Heart left ventricle (tissue), 16 donors: ENCODE measurements at regions of chr11 and their contacts with region 1.

Region 1: DNA sequence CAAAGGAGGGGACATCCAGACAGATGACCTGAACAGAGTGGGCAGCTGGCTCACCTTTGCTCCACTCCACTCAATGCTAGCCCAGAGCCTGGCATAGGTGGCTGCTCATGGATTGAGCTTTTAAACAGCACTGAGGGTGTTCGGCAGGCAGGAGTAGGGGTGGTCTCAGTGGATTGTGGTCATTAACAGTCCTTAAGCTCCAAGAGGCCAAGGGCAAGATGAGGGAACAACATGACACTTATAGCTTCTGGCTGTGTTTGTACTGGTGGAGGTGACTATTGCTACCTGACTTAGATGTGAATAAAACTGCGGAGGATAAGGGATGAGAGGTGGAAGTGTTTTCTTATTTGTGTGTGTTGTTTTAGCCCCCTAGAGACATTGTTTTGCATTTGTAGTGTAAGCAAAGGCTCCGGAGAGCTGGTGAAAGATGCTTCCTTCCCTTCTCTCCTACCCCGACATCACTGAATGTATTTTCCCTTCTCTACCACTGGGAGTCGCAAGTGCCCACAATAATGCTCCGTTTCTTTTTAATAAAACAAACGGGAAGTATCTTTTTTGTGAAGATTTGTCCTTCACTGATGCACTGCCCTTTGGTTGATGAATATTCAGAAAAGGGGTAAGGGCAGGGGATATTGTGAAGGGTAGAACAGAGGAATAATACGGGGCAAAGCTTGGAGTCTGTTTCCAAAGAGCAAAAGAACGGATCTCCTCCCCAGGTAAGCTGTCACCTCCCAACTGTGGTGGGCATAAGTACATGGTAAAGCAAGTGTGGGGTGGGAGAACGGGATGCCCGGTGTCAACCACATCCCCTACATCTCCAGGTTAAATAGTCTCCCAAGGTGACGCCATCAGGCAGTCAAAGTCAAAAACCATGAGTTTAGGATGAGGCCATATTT is 27.5 kb upstream of the MTNR1B start:
- DNase-seq: no peak
- ATAC-seq: no peak
- H3K4me3 ChIP-seq: no peak overlapping the region
- H3K27ac ChIP-seq: no peak overlapping the region
- H3K4me1 ChIP-seq: no peaks in the 10 kb centered on the region
- H3K27me3 ChIP-seq: peaks cover 0 to 14% (median 0%) of the 10 kb centered on the region in 9 donors
- CTCF ChIP-seq: peak; percentile 30 to 64 (median 50)
- POLR2A ChIP-seq: no peak

Region 2: DNA sequence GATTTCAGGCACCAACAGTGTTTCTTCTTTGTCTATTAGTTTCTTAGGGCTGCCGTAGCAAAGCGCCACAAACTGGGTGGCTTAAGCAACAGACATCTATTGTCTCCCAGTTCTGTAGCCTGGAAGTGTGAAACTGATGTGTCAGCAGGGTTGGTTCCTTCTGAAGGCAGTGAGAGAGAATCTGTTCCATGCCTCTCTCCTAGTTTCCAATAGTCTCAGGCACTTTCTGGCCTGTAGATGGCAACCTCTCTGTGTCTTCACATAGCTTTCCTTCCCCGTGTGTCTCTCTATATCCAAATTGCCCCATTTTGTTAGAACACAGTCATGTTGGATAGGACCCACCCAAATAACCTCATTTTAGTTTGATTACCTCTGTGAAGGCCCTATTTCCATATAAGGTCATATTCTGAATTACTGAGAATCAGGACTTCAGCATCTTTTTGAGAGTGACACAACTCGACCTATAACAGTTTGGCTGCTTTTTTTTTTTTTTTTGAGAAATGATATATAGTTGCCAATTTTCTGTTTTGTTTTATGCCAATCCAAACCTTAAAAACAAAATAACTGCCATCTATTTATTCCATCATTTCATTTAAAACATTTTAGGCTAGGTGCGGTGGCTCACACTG is 147.7 kb after region 1 on chr11:
- intact Hi-C with region 1: no loop called
- DNase-seq: peak in 1 of 5 donors; percentile 24
- ATAC-seq: peak; percentile 28 to 85 (median 62)
- H3K4me3 ChIP-seq: no peak overlapping the region
- H3K27ac ChIP-seq: no peak overlapping the region
- H3K4me1 ChIP-seq: peaks cover 0 to 5% (median 0%) of the 10 kb centered on the region in 12 donors
- H3K27me3 ChIP-seq: no peaks in the 10 kb centered on the region
- CTCF ChIP-seq: peak in 9 of 12 donors; percentile 8 to 55 (median 30)
- POLR2A ChIP-seq: no peak

Region 3: GRCh38 chr11:93187290-93187689 is 245.4 kb after region 1 on chr11:
- intact Hi-C with region 1: no loop called
- DNase-seq: no peak
- ATAC-seq: no peak
- H3K4me3 ChIP-seq: no peak overlapping the region
- H3K27ac ChIP-seq: no peak overlapping the region
- H3K4me1 ChIP-seq: peaks cover 0 to 4% (median 0%) of the 10 kb centered on the region in 12 donors
- H3K27me3 ChIP-seq: no peaks in the 10 kb centered on the region
- CTCF ChIP-seq: no peak
- POLR2A ChIP-seq: no peak

Region 4: GRCh38 chr11:93225662-93226061 is 283.7 kb after region 1 on chr11:
- intact Hi-C with region 1: loop called (anchors 2 to 10 kb)
- DNase-seq: no peak
- ATAC-seq: no peak
- H3K4me3 ChIP-seq: no peak overlapping the region
- H3K27ac ChIP-seq: no peak overlapping the region
- H3K4me1 ChIP-seq: no peaks in the 10 kb centered on the region
- H3K27me3 ChIP-seq: peaks cover 0 to 9% (median 0%) of the 10 kb centered on the region in 9 donors
- CTCF ChIP-seq: peak in 10 of 12 donors; percentile 23 to 57 (median 40)
- POLR2A ChIP-seq: no peak